ENCODE measurements at regions of chr9 and their contacts with region 1.

Region 1: DNA sequence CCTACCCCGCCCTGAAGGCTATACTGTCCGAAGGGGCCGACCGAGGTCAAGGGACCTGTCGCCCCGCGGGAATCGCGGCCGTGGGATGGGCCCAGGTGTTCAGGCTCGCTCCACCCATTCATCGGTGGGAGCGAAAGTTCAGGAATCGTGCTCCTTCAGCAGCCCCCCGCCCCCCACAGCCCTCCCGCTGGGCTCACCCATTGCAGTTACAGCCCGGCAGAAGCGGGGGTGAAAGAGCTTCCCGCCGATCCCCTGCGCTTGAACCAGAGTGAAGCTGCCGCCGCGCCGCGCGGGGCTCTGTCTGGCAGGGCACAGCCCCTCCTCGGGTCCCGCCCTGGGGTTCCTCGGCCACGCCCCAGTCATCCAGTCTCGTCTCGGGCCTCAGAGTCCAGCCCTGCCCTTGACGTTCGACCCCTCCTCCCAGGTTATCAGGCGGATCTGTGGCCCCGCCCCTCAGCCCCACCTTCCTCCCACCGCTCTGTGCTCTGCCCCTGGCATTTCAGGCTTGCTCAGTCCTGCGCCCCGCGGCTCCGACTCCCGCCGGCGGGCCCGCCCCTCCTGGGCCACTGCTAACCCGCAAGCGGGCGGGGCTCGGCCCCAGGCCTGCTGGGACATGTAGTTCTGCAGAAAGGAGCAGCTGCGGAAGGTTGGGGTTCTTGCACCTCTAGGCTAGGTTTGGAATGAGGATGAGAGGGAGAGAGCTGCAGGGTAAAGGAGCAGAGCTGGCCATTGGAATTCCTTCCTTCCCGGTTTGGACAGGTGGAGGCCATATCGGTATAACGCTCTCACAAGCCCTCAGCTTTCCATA is at the start of gene MYORG:
- DNase-seq: peak; percentile 98
- H3K4me3 Mint-ChIP-seq: peak within 1 kb of the TSS; percentile 72
- H3K27ac Mint-ChIP-seq: peak within 1 kb of the TSS; percentile 68
- H3K4me1 Mint-ChIP-seq: peaks cover 35% of the 10 kb centered on the region
- H3K27me3 Mint-ChIP-seq: no peaks in the 10 kb centered on the region
- CTCF ChIP-seq: no peak
- total RNA-seq, gene MYORG: 2.4 and 2.9 TPM in 2 replicates

Region 2: GRCh38 chr9:34010979-34011378 is 365.8 kb before region 1 on chr9:
- CTCF ChIA-PET with region 1: no interaction called
- POLR2A ChIA-PET with region 1: no interaction called
- intact Hi-C with region 1: loop called (anchors 5 kb)
- DNase-seq: peak; percentile 22
- H3K4me3 Mint-ChIP-seq: no peak overlapping the region
- H3K27ac Mint-ChIP-seq: no peak overlapping the region
- H3K4me1 Mint-ChIP-seq: no peaks in the 10 kb centered on the region
- H3K27me3 Mint-ChIP-seq: no peaks in the 10 kb centered on the region
- CTCF ChIP-seq: peak; percentile 29